ENCODE measurements at regions of chr3 and their contacts with region 1.

Region 1: DNA sequence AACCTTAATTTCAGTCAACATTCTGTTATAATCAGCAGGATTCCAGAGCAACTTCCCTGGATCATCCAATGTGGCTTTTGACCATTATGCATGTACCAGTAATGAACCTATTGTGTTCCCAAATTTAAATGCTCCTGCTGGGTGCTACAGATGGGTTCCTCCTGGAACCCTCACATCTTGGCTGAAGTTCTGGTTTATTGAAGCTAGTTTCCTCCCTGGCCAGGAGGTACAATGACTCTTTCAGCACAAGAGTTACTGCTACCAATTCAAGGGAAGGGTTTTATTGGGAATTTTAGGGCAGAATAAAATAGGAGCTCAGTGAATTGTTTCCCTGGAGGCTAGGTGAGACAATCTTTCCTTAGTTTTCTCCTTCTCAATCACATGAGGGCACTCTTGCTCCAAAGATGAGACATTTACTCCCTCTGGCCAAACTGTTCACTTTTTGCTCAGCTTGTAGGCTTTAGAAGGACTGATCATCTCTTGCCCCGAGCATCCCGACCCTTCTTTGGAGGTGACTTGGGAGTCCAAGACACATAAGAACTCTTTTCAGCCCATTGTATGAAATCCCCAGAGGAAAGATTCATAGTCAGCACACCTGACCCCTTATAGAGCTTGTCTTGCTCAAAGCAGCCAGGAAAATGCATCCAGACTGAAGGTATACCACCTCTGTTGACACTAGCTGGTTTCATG is 8.8 kb upstream of the NPHP3 start:
- DNase-seq: peak; percentile 44
- H3K4me3 ChIP-seq: no peak overlapping the region
- CTCF ChIP-seq: peak; percentile 62

Region 2: DNA sequence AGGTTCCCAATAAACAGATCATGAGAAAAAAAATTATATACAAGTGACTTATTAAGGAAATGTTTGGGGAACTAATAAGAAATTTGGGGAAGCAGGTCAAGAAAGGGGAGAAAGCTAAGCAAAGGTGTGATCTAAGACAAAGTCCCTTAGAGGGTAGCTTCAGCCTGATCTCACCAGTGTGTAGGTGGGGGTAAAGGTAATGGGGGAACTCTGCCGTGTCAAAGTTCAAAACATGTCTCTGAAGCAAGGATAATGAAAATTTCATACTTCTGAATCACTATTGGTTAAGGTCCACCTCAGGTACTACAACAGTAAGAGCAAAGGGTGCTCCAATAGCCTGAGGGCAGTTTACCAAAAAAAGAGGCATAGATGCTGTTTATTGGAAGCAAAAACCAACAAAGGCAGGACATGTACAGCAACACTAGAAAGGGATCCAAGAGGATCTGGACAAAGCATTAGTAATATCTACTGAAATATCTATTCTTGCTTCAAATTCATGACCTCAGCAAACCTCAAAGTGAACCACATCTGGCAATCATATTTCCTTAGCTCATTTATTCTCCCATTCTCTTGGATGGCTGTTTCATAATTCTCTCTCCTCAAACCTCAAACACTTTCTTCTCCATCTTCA is 78.3 kb before region 1 on chr3:
- in situ Hi-C with region 1: no loop called
- DNase-seq: no peak
- H3K4me3 ChIP-seq: no peak overlapping the region
- CTCF ChIP-seq: no peak

Region 3: DNA sequence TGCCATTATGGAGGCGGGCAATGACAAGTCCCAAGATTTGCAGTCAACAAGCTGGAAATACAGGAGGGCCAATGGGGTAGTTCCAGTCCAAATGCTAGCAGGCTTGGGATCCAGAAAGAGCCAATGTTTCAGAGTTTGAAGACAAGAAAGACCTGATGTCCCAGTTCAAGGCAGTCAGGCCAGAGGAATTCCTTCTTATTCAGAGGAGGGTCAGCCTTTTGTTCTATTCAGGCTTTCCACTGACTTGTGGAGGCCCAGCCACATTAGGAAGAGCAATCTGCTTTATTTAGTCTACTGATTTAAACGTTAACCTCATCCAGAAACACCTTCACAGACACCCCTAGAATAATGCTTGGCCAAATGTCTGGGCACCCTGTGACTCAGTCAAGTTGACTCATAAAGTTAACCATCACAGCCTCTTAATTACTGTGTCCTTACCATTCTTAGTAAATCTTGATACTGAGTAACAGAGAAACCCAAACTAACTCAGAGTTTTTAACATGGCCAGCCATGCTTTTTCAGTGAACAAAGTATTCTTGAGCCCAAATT is 42.1 kb after region 1 on chr3:
- in situ Hi-C with region 1: no loop called
- DNase-seq: no peak
- H3K4me3 ChIP-seq: no peak overlapping the region
- CTCF ChIP-seq: no peak

Region 4: DNA sequence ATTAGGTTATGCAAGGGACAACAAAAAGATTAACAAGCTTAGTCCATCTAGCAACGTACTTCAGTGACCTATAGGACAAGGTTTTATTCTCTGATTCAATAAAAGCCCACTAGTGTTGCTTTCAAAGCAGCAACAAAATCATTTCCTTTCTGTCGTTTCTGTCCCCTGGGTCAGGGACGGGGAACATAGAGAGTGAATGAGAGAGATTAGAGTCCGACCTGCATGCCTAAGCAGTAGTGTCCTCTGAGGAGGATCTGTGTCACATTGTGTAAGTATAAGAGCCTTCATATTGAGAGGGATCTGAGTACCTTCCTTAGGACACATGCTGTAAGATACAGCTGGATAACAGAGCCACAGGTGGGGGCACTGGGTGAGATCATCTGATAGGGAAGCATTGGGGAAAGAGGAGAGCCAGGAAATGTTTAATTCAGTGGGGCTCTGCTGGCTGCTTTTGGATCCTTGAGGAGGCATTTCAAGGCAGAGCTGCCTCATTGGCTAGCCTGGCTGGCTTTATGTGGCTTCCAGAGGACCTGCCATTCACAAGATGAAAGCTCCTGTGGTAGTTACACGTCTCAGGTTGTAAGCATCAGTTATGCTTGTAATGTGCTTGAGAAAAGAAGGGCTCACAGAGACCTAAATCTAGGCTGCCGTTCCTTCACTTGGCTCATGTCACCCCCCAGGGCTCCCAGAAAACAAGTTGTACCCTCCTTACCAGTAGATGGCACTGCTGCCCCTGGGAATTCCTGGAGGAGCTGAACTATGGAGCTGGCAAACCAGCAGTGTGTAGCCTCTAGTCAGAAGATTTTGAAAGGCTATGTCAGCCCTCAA is 309.9 kb after region 1 on chr3:
- in situ Hi-C with region 1: loop called (anchors 25 kb)
- DNase-seq: peak; percentile 80
- H3K4me3 ChIP-seq: no peak overlapping the region
- CTCF ChIP-seq: peak; percentile 82

Region 5: GRCh38 chr3:133384331-133385027 is 653.4 kb after region 1 on chr3:
- in situ Hi-C with region 1: loop called (anchors 5 kb)
- DNase-seq: peak; percentile 68
- H3K4me3 ChIP-seq: no peak overlapping the region
- CTCF ChIP-seq: peak; percentile 95